ENCODE measurements at regions of chr17 and their contacts with region 1.

Region 1: DNA sequence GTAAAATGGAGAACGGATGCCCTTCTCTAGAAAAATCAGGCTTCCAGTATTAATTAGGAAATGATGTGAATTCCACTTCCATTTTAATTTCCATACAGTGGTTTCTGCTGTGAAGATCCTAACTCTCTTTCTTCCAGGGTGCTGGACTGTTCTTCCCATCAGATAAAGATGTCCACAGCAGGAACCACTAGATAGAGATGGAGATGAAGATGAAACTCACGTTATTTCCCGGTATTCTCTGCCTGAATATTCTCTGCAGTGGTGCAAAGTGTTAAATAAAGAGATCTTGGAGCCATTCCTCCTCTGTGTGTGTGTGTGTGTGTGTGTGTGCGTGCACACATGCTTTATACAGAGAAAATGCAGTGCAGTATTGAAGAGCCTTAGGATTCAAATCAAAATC is 727.5 kb downstream of the KCNJ2 start:
- DNase-seq: no peak
- H3K4me3 ChIP-seq: no peak overlapping the region
- H3K27ac ChIP-seq: no peak overlapping the region
- H3K4me1 ChIP-seq: no peaks in the 10 kb centered on the region
- CTCF ChIP-seq: no peak

Region 2: DNA sequence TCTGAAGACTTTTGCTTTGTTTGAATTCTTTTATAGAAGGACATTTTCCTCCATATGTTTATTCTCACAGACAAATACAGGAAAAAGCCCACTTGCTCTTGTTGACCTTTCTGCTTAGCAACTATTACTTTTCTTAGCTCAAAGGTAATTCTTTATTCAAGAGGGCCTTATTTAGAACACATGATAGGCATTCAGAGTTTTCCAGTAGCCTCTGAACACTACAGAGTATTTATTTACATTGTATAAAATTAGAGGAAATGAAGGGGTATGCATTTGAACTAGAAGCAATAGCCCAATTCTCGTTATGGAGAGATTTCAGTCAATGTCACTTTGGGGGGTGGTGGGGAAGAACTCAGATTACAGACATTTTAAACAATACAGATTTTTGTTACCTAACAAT is 145.9 kb before region 1 on chr17:
- CTCF ChIA-PET with region 1: no interaction called
- POLR2A ChIA-PET with region 1: no interaction called
- intact Hi-C with region 1: no loop called
- DNase-seq: no peak
- H3K4me3 ChIP-seq: no peak overlapping the region
- H3K27ac ChIP-seq: no peak overlapping the region
- H3K4me1 ChIP-seq: no peaks in the 10 kb centered on the region
- CTCF ChIP-seq: no peak

Region 3: DNA sequence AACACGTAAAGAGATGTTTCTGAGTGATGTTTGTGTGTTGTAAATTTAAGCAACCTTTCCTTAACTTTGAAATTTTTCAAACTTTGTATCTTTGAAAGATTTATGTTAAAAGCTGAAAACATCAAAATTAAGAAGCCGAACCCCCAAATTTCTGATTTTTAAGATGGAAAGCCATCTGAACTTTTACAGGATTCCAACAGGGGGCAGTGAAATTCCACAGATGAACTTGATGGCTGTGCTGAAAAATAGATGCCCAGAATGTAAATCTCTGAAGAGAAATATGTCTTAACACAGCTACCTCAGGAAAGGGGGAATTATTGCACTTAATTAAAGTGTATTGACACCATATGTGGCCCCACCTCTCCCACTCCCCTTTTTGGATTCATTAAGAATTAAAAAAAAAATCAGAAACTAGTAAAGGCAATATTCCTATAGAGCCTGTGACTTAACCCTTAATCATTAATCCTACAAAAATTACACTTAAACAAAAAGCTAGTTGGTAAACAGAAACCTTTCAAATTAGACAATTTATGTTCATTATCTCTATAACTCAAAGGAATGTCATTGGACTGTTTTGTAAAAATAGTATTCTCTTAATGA is 129.6 kb before region 1 on chr17:
- CTCF ChIA-PET with region 1: no interaction called
- POLR2A ChIA-PET with region 1: no interaction called
- intact Hi-C with region 1: no loop called
- DNase-seq: peak; percentile 43
- H3K4me3 ChIP-seq: no peak overlapping the region
- H3K27ac ChIP-seq: no peak overlapping the region
- H3K4me1 ChIP-seq: no peaks in the 10 kb centered on the region
- CTCF ChIP-seq: peak; percentile 96

Region 4: DNA sequence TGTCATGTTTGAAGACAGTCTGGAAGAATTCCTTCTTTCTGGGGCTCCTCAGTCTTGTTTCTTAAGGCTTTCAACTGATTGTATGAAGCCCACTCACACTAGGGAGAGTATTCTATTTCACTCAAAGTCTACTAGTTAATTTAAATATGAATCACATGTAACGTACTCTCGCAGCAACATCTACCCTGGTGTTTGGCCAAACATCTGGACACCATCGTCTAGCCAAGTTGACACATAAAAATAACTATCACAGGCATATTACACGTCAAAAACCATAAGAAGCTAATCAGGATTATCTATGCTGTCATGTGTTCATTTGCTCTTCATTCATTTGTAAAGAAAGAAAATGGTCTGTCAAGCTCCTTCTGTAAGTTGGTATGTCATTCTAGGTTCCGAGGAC is 59.9 kb after region 1 on chr17:
- CTCF ChIA-PET with region 1: no interaction called
- POLR2A ChIA-PET with region 1: no interaction called
- intact Hi-C with region 1: loop called (anchors 10 kb)
- DNase-seq: no peak
- H3K4me3 ChIP-seq: no peak overlapping the region
- H3K27ac ChIP-seq: no peak overlapping the region
- H3K4me1 ChIP-seq: no peaks in the 10 kb centered on the region
- CTCF ChIP-seq: no peak

Region 5: GRCh38 chr17:71180801-71181385 is 284.1 kb after region 1 on chr17:
- CTCF ChIA-PET with region 1: no interaction called
- POLR2A ChIA-PET with region 1: no interaction called
- intact Hi-C with region 1: no loop called
- DNase-seq: no peak
- H3K4me3 ChIP-seq: no peak overlapping the region
- H3K27ac ChIP-seq: no peak overlapping the region
- H3K4me1 ChIP-seq: no peaks in the 10 kb centered on the region
- CTCF ChIP-seq: no peak

Region 6: DNA sequence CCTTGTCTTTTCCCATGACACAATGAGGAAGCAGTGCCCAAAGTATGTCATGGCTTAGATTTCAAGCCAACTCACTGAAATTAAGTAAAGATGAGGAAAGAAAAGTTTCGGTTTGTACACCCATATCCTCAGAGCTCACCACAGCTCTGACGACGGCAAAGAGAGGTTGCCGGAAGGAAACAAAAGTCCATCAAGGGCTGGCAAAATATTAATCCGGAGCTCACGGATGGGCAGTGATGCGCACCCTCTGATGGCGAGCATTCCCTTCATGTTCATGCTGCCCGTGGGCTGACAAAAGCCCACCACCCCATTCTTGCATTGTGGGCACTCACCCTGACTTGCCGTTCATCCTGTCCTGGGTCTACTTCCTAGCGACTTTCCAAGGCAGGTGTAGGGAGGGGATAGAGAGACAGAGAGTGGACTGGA is 1327.0 kb after region 1 on chr17:
- CTCF ChIA-PET with region 1: no interaction called
- POLR2A ChIA-PET with region 1: no interaction called
- intact Hi-C with region 1: no loop called
- DNase-seq: no peak
- H3K4me3 ChIP-seq: no peak overlapping the region
- H3K27ac ChIP-seq: no peak overlapping the region
- H3K4me1 ChIP-seq: no peaks in the 10 kb centered on the region
- CTCF ChIP-seq: no peak